ENCODE measurements at regions of chr9 and their contacts with region 1.

Region 1: GRCh38 chr9:122125158-122125508 is 32.0 kb upstream of the TTLL11 start:
- DNase-seq: peak; percentile 69 to 78
- H3K4me3 ChIP-seq: no peak overlapping the region
- H3K27ac ChIP-seq: no peak overlapping the region
- H3K4me1 ChIP-seq: peaks cover 0 to 19% of the 10 kb centered on the region in 2 donors
- H3K27me3 ChIP-seq: no peaks in the 10 kb centered on the region
- CTCF ChIP-seq: peak; percentile 88 to 94 (median 92)
- POLR2A ChIP-seq: no peak

Region 2: GRCh38 chr9:121735065-121735789 is 389.9 kb before region 1 on chr9:
- intact Hi-C with region 1: no loop called
- DNase-seq: no peak
- H3K4me3 ChIP-seq: no peak overlapping the region
- H3K27ac ChIP-seq: peak overlapping the region; percentile 64 to 91 (median 77)
- H3K4me1 ChIP-seq: peaks cover 28 to 70% of the 10 kb centered on the region in 2 donors
- H3K27me3 ChIP-seq: no peaks in the 10 kb centered on the region
- CTCF ChIP-seq: peak in 1 of 6 experiments; percentile 22
- POLR2A ChIP-seq: no peak

Region 3: DNA sequence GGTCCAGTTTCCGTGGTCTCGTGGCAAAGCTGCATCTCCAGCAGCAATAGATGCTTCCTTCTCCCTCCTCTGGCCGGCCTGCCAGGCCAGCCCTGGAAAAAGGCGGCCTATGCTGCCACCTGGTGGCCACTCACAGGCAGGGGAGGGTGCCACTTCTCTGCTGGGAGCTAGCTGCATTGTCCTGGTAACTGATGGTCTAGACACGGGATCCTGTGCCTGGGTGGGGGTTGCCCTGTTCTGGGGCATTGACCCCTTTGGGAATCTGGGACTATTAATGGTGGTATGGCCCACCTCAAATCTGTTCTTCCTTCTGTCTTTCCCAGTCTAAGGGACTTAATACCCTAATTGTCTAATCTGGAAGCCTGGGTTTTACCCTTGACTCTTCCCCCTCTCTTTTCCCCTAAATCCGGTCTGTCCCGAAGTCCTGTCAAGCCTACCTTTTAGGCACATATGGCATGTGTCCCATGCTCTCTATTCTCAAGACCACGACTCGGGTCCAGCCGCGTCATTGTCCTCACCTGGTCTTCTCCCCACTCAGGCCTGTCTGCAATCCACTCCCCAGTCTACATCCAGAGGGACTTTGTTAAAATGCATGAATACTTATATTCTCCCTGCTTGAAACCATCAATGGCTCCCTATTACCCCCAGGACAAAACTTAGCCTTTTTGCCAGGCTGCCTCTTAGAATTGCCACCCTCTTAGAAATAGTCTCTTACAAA is 225.7 kb after region 1 on chr9:
- intact Hi-C with region 1: loop called (anchors 2 kb)
- DNase-seq: peak; percentile 71 to 80
- H3K4me3 ChIP-seq: no peak overlapping the region
- H3K27ac ChIP-seq: no peak overlapping the region
- H3K4me1 ChIP-seq: peaks cover 8 to 10% of the 10 kb centered on the region in 2 donors
- H3K27me3 ChIP-seq: no peaks in the 10 kb centered on the region
- CTCF ChIP-seq: peak; percentile 88 to 93 (median 91)
- POLR2A ChIP-seq: no peak

Region 4: GRCh38 chr9:122453677-122454135 is 328.6 kb after region 1 on chr9:
- intact Hi-C with region 1: loop called (anchors 10 kb)
- DNase-seq: no peak
- H3K4me3 ChIP-seq: no peak overlapping the region
- H3K27ac ChIP-seq: no peak overlapping the region
- H3K4me1 ChIP-seq: no peaks in the 10 kb centered on the region
- H3K27me3 ChIP-seq: no peaks in the 10 kb centered on the region
- CTCF ChIP-seq: no peak
- POLR2A ChIP-seq: no peak

Region 5: DNA sequence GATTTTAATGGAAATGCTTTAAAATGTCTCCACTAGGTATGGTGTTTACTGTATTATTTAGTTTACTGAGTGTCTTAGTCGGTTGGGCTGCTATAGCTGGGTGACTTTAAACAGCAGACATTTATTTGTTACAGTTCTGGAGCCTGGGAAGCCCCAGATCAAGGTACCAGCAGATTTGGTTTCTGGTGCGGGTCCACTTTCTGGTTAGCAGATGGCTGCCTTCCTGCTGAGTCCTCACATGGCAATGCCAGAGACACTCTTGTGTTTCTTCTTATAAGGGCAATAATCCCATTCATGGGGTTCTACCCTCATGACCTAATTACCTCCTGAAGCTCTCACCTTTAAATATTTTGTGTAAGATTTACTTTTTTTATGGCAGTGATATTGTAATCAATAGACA is 393.1 kb after region 1 on chr9:
- intact Hi-C with region 1: no loop called
- DNase-seq: no peak
- H3K4me3 ChIP-seq: no peak overlapping the region
- H3K27ac ChIP-seq: no peak overlapping the region
- H3K4me1 ChIP-seq: no peaks in the 10 kb centered on the region
- H3K27me3 ChIP-seq: no peaks in the 10 kb centered on the region
- CTCF ChIP-seq: no peak
- POLR2A ChIP-seq: no peak